ENCODE measurements at regions of chr11 and their contacts with region 1.

Region 1: GRCh38 chr11:111336582-111337256 is 38.4 kb downstream of the POU2AF3 start:
- DNase-seq: peak; percentile 45
- ATAC-seq: no peak
- H3K4me3 ChIP-seq: peak overlapping the region; percentile 35 to 59 (median 49)
- H3K27ac ChIP-seq: peak overlapping the region; percentile 78
- H3K4me1 ChIP-seq: peaks cover 67% of the 10 kb centered on the region
- H3K27me3 ChIP-seq: no peaks in the 10 kb centered on the region
- CTCF ChIP-seq: no peak
- EP300 ChIP-seq: peak; percentile 36 to 56; a peak in 2 of 4 replicates
- POLR2A ChIP-seq: no peak
- RAD21 ChIP-seq: no peak

Region 2: DNA sequence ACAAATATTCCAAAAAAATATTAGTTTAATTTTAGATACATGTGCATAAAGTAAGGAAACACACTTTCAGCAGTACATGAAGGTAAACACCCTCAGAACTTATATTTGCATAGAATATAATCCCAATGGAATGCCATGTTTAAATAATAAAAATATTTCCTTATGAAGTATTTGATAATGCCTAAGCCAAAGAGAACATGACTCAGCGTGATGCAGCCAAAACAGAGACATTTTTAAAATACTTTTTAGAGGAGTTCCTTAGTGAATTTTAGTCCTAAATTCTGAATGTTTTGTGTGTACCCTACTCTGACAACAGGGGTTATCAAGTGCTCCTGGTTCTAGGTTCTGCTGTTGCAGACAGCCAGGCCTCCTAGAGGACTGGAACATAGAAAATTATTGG is 130.2 kb before region 1 on chr11:
- CTCF ChIA-PET with region 1: no interaction called
- POLR2A ChIA-PET with region 1: no interaction called
- in situ Hi-C with region 1: no loop called
- intact Hi-C with region 1: no loop called
- DNase-seq: no peak
- ATAC-seq: no peak
- H3K4me3 ChIP-seq: no peak overlapping the region
- H3K27ac ChIP-seq: no peak overlapping the region
- H3K4me1 ChIP-seq: no peaks in the 10 kb centered on the region
- H3K27me3 ChIP-seq: peaks cover 0 to 3% of the 10 kb centered on the region in 2 experiments; a peak in 1 of 5 replicates
- CTCF ChIP-seq: no peak
- EP300 ChIP-seq: no peak
- POLR2A ChIP-seq: no peak
- RAD21 ChIP-seq: no peak

Region 3: GRCh38 chr11:111299101-111300026 is 37.4 kb before region 1 on chr11:
- CTCF ChIA-PET with region 1: no interaction called
- POLR2A ChIA-PET with region 1: interaction called, 102 read pairs
- in situ Hi-C with region 1: no loop called
- intact Hi-C with region 1: loop called (anchors 2 kb)
- DNase-seq: peak; percentile 46
- ATAC-seq: peak; percentile 94
- H3K4me3 ChIP-seq: peak overlapping the region; percentile 62 to 78 (median 72)
- H3K27ac ChIP-seq: peak overlapping the region; percentile 81
- H3K4me1 ChIP-seq: peaks cover 68% of the 10 kb centered on the region
- H3K27me3 ChIP-seq: no peaks in the 10 kb centered on the region
- CTCF ChIP-seq: peak; percentile 80
- EP300 ChIP-seq: no peak
- POLR2A ChIP-seq: peak; percentile 61 to 66; a peak in 3 of 4 replicates
- RAD21 ChIP-seq: peak; percentile 92

Region 4: GRCh38 chr11:111320728-111321568 is 15.8 kb before region 1 on chr11:
- CTCF ChIA-PET with region 1: no interaction called
- POLR2A ChIA-PET with region 1: interaction called, 39 read pairs
- in situ Hi-C with region 1: no loop called
- intact Hi-C with region 1: loop called (anchors 1 kb)
- DNase-seq: peak; percentile 83
- ATAC-seq: peak; percentile 97
- H3K4me3 ChIP-seq: peak overlapping the region in 1 of 3 experiments; percentile 36; a peak in 1 of 6 replicates
- H3K27ac ChIP-seq: peak overlapping the region; percentile 70
- H3K4me1 ChIP-seq: peaks cover 43% of the 10 kb centered on the region
- H3K27me3 ChIP-seq: no peaks in the 10 kb centered on the region
- CTCF ChIP-seq: no peak
- EP300 ChIP-seq: peak in 1 of 2 experiments; percentile 25; a peak in 1 of 4 replicates
- POLR2A ChIP-seq: peak in 1 of 2 experiments; percentile 49; a peak in 1 of 4 replicates
- RAD21 ChIP-seq: no peak

Region 5: DNA sequence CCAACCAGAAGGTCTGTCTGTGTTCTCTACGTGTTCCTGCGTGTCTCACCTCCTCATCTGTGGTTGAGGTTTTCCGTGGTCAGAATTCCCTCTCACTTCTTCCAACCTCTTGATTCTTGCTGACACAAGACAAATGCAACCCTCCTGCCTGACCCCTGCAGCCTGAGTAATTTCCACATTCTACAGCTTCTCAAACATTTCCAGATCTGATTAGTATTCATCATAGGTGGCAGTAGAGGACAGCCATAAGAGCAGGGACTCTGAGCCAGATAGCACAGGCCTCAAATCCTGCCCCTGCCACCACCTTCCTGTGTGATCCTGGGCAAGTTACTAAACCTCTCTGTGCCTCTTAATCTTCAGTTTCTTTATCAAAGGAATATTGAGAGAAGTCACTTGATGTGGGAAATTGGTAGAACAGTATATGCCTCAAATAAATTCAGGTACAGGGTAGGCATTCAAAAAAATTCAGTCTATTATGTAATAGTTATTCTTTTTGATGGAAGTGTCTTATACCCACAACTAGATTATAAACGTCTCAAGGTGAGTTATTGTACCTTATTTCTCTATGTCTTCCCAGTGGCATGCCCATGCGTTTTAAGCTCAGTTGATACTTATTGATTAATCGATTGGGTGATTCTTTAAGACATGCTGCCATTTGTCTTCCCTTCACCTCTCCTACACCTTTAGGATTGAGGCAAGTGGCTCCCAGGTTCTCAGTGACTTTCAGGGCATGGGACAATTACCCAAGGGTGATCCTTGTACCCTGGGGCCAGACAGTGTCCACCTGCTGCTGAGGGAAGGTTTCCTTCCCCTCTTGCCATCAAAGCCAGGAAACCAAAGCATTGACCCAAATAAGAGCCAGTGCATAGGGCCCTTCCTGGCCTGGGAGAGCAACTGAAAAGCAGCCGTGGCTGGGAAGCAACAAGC is 22.8 kb after region 1 on chr11:
- CTCF ChIA-PET with region 1: interaction called, 6 read pairs
- POLR2A ChIA-PET with region 1: interaction called, 197 read pairs
- in situ Hi-C with region 1: no loop called
- intact Hi-C with region 1: loop called (anchors 1 kb)
- DNase-seq: peak; percentile 74
- ATAC-seq: peak; percentile 28
- H3K4me3 ChIP-seq: peak overlapping the region in 1 of 3 experiments; percentile 19; a peak in 1 of 6 replicates
- H3K27ac ChIP-seq: peak overlapping the region; percentile 98
- H3K4me1 ChIP-seq: peaks cover 100% of the 10 kb centered on the region
- H3K27me3 ChIP-seq: no peaks in the 10 kb centered on the region
- CTCF ChIP-seq: peak; percentile 65
- EP300 ChIP-seq: peak in 1 of 2 experiments; percentile 17; a peak in 1 of 4 replicates
- POLR2A ChIP-seq: no peak
- RAD21 ChIP-seq: peak; percentile 63; the same call in 1 of the 2 replicates

Region 6: GRCh38 chr11:111395081-111395480 is 58.4 kb after region 1 on chr11:
- CTCF ChIA-PET with region 1: no interaction called
- POLR2A ChIA-PET with region 1: interaction called, 9 read pairs
- in situ Hi-C with region 1: no loop called
- intact Hi-C with region 1: loop called (anchors 1 kb)
- DNase-seq: peak; percentile 93
- ATAC-seq: peak; percentile 100
- H3K4me3 ChIP-seq: no peak overlapping the region
- H3K27ac ChIP-seq: peak overlapping the region; percentile 54
- H3K4me1 ChIP-seq: peaks cover 77% of the 10 kb centered on the region
- H3K27me3 ChIP-seq: no peaks in the 10 kb centered on the region
- CTCF ChIP-seq: peak; percentile 46
- EP300 ChIP-seq: peak in 1 of 2 experiments; percentile 73; a peak in 2 of 4 replicates
- POLR2A ChIP-seq: peak; percentile 40 to 46; a peak in 2 of 4 replicates
- RAD21 ChIP-seq: peak; percentile 73